Posterior cingulate gyrus (tissue), 11 donors: ENCODE measurements at regions of chr10 and their contacts with region 1.

Region 1: DNA sequence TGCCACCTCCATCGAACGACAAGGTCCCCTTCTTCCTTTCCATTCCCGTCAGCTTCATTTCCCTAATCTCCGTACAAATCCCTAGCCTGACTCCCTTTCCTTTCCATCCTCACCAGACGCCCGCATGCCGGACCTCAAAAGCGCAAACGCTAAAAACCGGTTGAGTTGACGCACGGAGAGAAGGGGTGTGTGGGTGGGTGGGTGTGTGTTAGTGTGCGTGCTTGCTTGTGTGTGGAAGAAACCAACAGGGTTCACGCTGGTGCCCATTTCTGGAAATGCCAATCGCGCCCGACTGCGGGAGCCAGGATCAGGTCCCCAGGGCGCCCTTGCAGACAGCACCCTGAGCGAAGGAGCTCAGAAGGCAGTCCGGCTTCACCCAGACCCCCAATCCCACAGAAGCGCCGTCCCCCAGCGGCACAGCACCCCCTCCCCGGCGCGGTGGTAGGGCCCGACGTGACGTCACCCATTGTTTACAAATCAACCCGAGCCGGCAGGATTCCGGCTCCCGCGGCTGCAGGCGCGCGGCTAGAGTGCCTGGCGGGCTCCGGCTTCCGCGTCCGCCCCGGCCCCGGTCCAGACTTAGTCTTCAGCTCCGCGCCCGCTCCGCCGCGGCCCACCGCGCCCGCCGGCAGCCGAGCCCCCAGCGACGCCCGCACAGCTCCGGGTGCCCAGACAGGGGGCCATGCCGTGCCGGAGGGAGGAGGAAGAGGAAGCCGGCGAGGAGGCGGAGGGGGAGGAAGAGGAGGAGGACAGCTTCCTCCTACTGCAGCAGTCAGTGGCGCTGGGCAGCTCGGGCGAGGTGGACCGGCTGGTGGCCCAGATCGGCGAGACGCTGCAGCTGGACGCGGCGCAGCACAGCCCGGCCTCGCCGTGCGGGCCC is at the start of gene FRAT1:
- DNase-seq: peak; percentile 78 to 98 (median 89)

Region 2: DNA sequence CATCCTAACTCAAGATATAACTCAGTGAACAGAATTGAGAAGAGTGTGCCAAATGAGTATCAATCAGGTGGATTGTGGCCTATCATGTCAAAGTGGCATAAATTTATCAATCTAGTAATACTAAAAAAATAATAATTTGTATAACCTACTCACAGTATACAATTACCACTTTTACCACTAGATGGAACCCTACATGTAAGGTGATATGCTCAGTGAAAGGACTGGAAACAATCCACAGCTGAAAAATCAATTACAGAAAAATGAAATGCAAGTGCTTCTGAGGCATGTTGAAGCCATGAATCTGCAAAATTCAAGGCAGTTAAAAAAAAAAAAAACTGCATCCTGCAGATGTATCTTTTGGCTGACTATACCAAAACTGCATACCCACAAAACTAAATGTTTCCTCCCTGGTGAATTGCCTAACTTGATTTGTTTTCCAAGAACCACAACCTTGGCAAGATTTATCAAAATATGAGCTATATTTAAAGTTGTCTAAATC is 40.5 kb before region 1 on chr10:
- intact Hi-C with region 1: loop called (anchors 5 kb)
- DNase-seq: no peak

Region 3: GRCh38 chr10:97292097-97292862 is 26.7 kb before region 1 on chr10 and contains the start of gene ARHGAP19:
- intact Hi-C with region 1: loop called (anchors 2 kb)
- DNase-seq: peak; percentile 87 to 99 (median 92)